Endothelial cell of umbilical vein (primary cell): ENCODE measurements at regions of chr16 and their contacts with region 1.

Region 1: DNA sequence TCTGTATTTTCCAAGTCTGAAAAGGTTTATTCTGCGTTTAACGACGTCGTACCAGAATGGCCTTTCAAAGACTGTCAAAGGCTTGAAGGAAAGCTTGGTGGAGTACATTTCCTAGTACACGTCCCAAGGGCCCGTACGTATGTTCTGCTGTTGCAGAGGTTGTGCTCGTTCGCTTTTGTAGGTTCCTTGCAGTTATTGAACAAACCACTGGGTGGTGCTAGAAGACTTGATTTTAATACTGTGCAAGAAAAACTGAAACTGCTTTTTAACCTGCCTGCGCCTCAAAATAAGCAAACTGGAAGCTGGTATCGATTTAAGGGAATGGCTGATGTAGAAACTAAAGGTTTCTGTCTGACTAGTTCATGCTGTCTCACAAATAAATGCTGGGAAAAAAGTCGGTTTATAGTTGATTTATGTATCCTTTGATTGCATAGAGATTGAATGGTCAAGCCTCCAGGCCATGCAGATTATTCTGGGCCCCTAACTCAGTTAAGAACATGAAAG is 54.6 kb downstream of the USP10 start:
- DNase-seq: peak; percentile 89
- H3K4me3 ChIP-seq: no peak overlapping the region
- H3K27ac ChIP-seq: no peak overlapping the region
- H3K4me1 ChIP-seq: peaks cover 20% of the 10 kb centered on the region
- H3K27me3 ChIP-seq: no peaks in the 10 kb centered on the region
- CTCF ChIP-seq: peak; percentile 64 to 70
- POLR2A ChIP-seq: no peak

Region 2: GRCh38 chr16:84484579-84485254 is 269.7 kb before region 1 on chr16:
- CTCF ChIA-PET with region 1: no interaction called
- POLR2A ChIA-PET with region 1: no interaction called
- dilution Hi-C with region 1: no loop called
- intact Hi-C with region 1: no loop called
- DNase-seq: peak; percentile 61
- H3K4me3 ChIP-seq: no peak overlapping the region
- H3K27ac ChIP-seq: no peak overlapping the region
- H3K4me1 ChIP-seq: no peaks in the 10 kb centered on the region
- H3K27me3 ChIP-seq: no peaks in the 10 kb centered on the region
- CTCF ChIP-seq: peak; percentile 58 to 69
- POLR2A ChIP-seq: no peak

Region 3: GRCh38 chr16:84738255-84739038 is 16.0 kb before region 1 on chr16:
- CTCF ChIA-PET with region 1: interaction called, 56 read pairs
- POLR2A ChIA-PET with region 1: no interaction called
- dilution Hi-C with region 1: no loop called
- intact Hi-C with region 1: no loop called
- DNase-seq: peak; percentile 92
- H3K4me3 ChIP-seq: no peak overlapping the region
- H3K27ac ChIP-seq: no peak overlapping the region
- H3K4me1 ChIP-seq: peaks cover 28% of the 10 kb centered on the region
- H3K27me3 ChIP-seq: no peaks in the 10 kb centered on the region
- CTCF ChIP-seq: peak; percentile 88 to 92
- POLR2A ChIP-seq: no peak

Region 4: GRCh38 chr16:84774810-84775209 is 20.4 kb after region 1 on chr16:
- CTCF ChIA-PET with region 1: interaction called, 12 read pairs
- POLR2A ChIA-PET with region 1: no interaction called
- dilution Hi-C with region 1: no loop called
- intact Hi-C with region 1: no loop called
- DNase-seq: peak; percentile 85
- H3K4me3 ChIP-seq: no peak overlapping the region
- H3K27ac ChIP-seq: peak overlapping the region; percentile 48
- H3K4me1 ChIP-seq: peaks cover 9% of the 10 kb centered on the region
- H3K27me3 ChIP-seq: no peaks in the 10 kb centered on the region
- CTCF ChIP-seq: no peak
- POLR2A ChIP-seq: no peak

Region 5: DNA sequence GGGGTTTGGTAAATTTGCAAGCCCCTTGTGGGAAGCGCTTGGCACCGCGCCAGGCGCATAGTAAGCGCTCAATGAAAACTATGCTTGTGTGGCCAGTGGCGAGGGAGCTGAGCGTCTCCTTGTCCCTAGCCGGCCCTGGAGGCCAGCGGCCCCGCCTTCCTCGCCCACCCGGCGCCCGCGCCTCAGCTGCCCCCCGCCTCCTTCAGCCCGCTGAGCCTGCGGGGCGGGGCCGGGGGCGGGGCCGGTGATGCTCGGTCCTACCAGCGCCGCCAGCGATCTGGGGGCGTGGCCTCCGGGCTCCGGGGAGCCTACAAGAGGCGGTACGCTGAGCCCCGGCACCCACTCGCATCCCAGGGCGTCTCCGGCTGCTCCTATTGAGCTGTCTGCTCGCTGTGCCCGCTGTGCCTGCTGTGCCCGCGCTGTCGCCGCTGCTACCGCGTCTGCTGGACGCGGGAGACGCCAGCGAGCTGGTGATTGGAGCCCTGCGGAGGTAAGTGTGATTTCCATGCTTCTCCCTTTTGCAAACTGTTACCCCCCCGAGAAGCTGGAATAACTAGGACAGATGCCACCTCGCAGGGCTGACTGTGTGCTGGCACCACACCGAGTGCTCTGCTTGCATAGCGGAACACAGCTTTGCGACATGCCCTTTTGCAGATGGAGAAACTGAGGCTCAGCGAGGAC is 65.4 kb after region 1 on chr16 and contains the start of gene CRISPLD2:
- CTCF ChIA-PET with region 1: interaction called, 9 read pairs
- POLR2A ChIA-PET with region 1: no interaction called
- dilution Hi-C with region 1: no loop called
- intact Hi-C with region 1: loop called (anchors 1 kb)
- DNase-seq: peak; percentile 86
- H3K4me3 ChIP-seq: peak within 1 kb of the TSS in 2 of 3 experiments; percentile 24 to 37
- H3K27ac ChIP-seq: no peak within 1 kb of the TSS
- H3K4me1 ChIP-seq: peaks cover 4% of the 10 kb centered on the region
- H3K27me3 ChIP-seq: peaks cover 6 to 11% of the 10 kb centered on the region in 2 experiments
- CTCF ChIP-seq: no peak
- POLR2A ChIP-seq: no peak
- total RNA-seq, gene CRISPLD2: 0.73 TPM in 1 of 2 replicates, not detected in the other

Region 6: DNA sequence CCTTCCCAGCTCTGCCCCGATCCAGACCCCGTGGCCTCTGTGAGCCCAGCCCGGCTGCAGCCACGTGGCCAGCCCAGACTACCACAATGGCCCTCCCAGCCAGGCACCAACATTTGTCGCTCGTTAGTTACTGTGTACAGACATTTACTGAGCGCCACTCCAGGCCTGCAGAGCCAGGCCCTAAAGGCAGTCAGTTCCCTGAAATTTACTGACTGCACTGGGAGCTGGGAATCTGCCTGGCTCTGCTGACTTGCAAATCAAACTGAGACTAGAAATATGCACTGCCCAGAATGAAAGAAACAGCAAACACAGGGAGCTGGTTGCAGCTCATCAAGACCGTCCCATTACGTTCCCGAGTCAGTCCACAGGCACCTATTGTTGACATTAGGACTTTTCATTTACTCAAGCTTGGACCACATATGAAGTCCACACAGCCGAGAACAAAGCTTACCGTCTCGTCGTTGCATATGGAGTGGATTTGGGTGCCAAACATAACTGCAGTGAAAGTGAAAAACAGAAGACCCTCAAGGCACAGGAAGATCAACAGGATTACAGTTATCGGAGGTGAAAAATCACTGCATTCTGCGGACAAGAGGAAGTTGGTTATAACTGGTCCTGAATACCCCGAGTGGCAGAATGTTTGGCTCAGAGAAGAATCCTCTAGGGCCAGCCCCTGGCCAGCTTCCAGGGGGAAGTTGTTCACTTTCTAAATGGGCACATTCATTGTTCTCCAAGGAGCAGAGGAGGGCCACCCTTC is 222.4 kb after region 1 on chr16:
- CTCF ChIA-PET with region 1: interaction called, 361 read pairs
- POLR2A ChIA-PET with region 1: no interaction called
- dilution Hi-C with region 1: loop called (anchors 25 kb)
- intact Hi-C with region 1: no loop called
- DNase-seq: peak; percentile 74
- H3K4me3 ChIP-seq: no peak overlapping the region
- H3K27ac ChIP-seq: no peak overlapping the region
- H3K4me1 ChIP-seq: peaks cover 16% of the 10 kb centered on the region
- H3K27me3 ChIP-seq: no peaks in the 10 kb centered on the region
- CTCF ChIP-seq: no peak
- POLR2A ChIP-seq: no peak